ENCODE measurements at regions of chr20 and their contacts with region 1.

Region 1: GRCh38 chr20:54680872-54681619 is 205.7 kb downstream of the DOK5 start:
- DNase-seq: peak in 1 of 5 donors; percentile 27
- ATAC-seq: no peak
- H3K4me3 ChIP-seq: no peak overlapping the region
- H3K27ac ChIP-seq: no peak overlapping the region
- H3K4me1 ChIP-seq: peaks cover 0 to 3% (median 0%) of the 10 kb centered on the region in 12 donors
- H3K27me3 ChIP-seq: peaks cover 0 to 49% (median 2%) of the 10 kb centered on the region in 9 donors
- CTCF ChIP-seq: peak; percentile 37 to 69 (median 60)
- POLR2A ChIP-seq: no peak

Region 2: GRCh38 chr20:54140927-54141566 is 540.0 kb before region 1 on chr20:
- intact Hi-C with region 1: no loop called
- DNase-seq: no peak
- ATAC-seq: no peak
- H3K4me3 ChIP-seq: no peak overlapping the region
- H3K27ac ChIP-seq: no peak overlapping the region
- H3K4me1 ChIP-seq: no peaks in the 10 kb centered on the region
- H3K27me3 ChIP-seq: peaks cover 0 to 14% (median 0%) of the 10 kb centered on the region in 9 donors
- CTCF ChIP-seq: no peak
- POLR2A ChIP-seq: no peak

Region 3: DNA sequence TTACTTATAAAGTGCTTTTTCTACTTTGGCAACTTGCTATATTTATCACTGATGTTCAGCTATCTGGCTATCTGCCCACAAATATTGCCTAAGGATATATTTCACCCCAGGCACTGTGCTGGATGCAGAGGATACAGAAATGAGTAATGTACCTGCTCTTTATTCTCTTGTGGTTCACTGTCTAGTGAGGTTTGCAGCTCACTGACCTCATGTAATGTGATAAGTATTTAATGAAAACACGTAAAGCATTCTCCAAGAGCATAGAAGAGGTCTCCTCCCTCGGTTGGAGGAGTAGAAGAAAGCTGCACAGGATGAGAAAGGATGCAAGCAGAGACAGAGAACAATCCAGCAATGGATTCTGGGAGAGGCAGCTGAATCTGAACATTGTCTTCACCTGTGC is 713.5 kb after region 1 on chr20:
- intact Hi-C with region 1: loop called in 1 of 10 experiments (anchors 10 kb)
- DNase-seq: no peak
- ATAC-seq: no peak
- H3K4me3 ChIP-seq: no peak overlapping the region
- H3K27ac ChIP-seq: no peak overlapping the region
- H3K4me1 ChIP-seq: no peaks in the 10 kb centered on the region
- H3K27me3 ChIP-seq: no peaks in the 10 kb centered on the region
- CTCF ChIP-seq: no peak
- POLR2A ChIP-seq: no peak

Region 4: GRCh38 chr20:56171087-56172012 is 1490.3 kb after region 1 on chr20:
- intact Hi-C with region 1: loop called in 5 of 10 experiments (anchors 10 kb)
- DNase-seq: no peak
- ATAC-seq: no peak
- H3K4me3 ChIP-seq: no peak overlapping the region
- H3K27ac ChIP-seq: no peak overlapping the region
- H3K4me1 ChIP-seq: no peaks in the 10 kb centered on the region
- H3K27me3 ChIP-seq: no peaks in the 10 kb centered on the region
- CTCF ChIP-seq: peak in 9 of 12 donors; percentile 22 to 48 (median 30)
- POLR2A ChIP-seq: no peak

Region 5: DNA sequence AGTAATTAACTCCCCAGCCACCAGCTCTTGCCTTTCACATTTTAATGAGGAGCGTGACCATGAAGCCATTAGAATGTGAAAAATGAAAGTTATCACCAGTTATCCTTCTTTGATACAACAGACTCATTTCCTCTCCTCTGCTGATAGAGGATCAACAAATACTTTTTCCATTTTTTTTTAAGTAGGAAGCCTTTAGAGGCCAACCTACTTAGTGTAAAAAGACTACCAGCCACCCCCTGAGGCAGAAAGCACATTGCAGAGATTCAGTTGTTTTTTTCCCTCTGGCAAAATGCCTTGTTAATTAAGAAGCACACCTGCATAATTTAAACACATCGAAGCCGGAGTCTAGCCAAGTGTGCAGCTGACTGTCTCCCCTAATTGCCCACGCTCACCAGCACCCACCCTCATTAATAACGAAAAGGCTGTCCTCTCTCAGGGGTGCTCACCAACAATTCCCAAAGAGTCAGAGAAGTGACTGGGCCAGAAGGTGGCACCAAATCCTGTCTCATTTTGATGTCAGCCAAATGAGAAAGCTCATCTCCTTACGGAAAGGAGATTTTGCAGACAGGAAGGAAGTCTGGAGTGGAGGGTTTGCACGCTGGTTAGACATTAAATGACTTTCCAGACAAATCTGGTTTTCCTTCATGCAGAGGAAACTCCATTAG is 1506.6 kb after region 1 on chr20:
- intact Hi-C with region 1: loop called in 1 of 10 experiments (anchors 10 kb)
- DNase-seq: no peak
- ATAC-seq: no peak
- H3K4me3 ChIP-seq: no peak overlapping the region
- H3K27ac ChIP-seq: no peak overlapping the region
- H3K4me1 ChIP-seq: no peaks in the 10 kb centered on the region
- H3K27me3 ChIP-seq: no peaks in the 10 kb centered on the region
- CTCF ChIP-seq: peak in 7 of 12 donors; percentile 17 to 35 (median 28)
- POLR2A ChIP-seq: no peak

Region 6: DNA sequence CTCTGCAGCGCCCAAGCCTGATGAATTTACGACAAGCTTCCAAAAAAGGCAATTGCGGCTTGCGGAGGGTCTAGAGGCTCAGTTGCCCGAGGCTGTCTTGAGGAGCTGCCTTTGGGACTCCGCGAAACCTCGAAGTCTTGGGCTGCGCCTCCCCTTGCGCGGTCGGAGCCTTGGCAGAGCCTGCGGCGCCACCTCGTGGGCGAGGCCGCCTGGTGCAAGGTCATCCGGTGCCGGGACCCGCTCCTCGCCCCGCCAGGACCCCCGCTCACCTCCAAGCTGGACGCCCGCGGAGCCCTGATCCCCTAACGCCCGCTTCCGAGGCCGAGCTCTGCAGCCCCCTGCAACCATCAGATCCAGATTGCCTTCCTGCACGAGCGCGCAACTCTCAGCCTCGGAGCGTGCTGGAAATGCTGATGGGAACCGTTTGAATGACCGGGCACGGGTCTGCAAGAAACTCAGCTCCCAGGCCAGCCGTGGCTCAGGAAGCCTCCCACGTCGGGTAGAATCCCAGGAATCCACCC is 1662.9 kb after region 1 on chr20:
- intact Hi-C with region 1: loop called in 1 of 10 experiments (anchors 5 kb)
- DNase-seq: peak in 4 of 5 donors; percentile 15 to 37 (median 32)
- ATAC-seq: peak in 3 of 4 donors; percentile 54 to 71 (median 70)
- H3K4me3 ChIP-seq: peak overlapping the region in 1 of 12 donors; percentile 22
- H3K27ac ChIP-seq: no peak overlapping the region
- H3K4me1 ChIP-seq: peaks cover 0 to 8% (median 1%) of the 10 kb centered on the region in 12 donors
- H3K27me3 ChIP-seq: peaks cover 4 to 69% (median 23%) of the 10 kb centered on the region in 9 donors
- CTCF ChIP-seq: peak; percentile 37 to 67 (median 54)
- POLR2A ChIP-seq: no peak

Measured in heart left ventricle (tissue), 16 donors.